Activated CD4-positive, alpha-beta T cell treated with anti-CD3 and anti-CD28 coated beads, Interleukin-2, amount 10 ng/mL, durations not matched to agents 24 days and 14 days (primary cell): ENCODE measurements at regions of chr15 and their contacts with region 1.

Region 1: DNA sequence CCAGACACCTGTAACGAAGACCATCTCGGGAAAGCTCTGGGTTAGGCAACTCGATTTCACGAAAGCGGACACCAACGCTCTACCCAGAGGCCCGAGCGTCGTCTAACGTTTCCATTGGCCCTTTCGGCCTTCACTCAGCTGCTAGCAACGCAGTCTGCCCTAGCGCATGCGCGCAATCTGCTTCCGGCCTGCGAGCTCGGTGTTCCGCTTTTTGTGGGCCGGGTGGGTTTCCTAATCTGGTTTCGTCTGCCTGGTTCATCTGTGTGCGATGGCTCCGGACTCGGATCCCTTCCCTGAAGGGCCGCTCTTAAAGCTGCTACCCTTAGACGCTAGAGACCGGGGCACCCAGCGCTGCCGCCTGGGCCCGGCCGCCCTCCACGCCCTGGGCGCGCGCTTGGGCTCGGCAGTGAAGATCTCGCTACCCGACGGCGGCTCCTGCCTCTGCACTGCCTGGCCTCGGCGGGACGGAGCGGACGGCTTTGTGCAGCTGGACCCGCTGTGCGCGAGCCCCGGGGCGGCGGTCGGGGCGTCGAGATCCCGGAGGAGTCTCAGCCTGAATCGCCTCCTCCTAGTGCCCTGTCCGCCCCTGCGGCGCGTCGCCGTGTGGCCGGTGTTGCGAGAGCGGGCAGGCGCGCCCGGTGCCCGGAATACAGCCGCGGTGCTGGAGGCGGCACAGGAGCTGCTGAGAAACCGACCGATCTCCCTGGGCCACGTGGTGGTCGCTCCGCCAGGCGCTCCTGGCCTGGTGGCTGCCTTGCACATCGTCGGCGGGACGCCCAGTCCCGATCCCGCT is 24.0 kb upstream of the GATM start:
- DNase-seq: peak; percentile 98
- H3K4me3 Mint-ChIP-seq: peak overlapping the region; percentile 90
- H3K27ac Mint-ChIP-seq: peak overlapping the region; percentile 87
- H3K4me1 Mint-ChIP-seq: peaks cover 26% of the 10 kb centered on the region
- H3K27me3 Mint-ChIP-seq: peaks cover 5% of the 10 kb centered on the region

Region 2: GRCh38 chr15:44728576-44729407 is 673.6 kb before region 1 on chr15:
- intact Hi-C with region 1: loop called (anchors 10 kb)
- DNase-seq: peak; percentile 99
- H3K4me3 Mint-ChIP-seq: peak overlapping the region; percentile 99
- H3K27ac Mint-ChIP-seq: peak overlapping the region; percentile 100
- H3K4me1 Mint-ChIP-seq: peaks cover 64% of the 10 kb centered on the region
- H3K27me3 Mint-ChIP-seq: peaks cover 2% of the 10 kb centered on the region

Region 3: GRCh38 chr15:45166834-45167630 is 235.3 kb before region 1 on chr15:
- intact Hi-C with region 1: loop called (anchors 1 kb)
- DNase-seq: peak; percentile 94
- H3K4me3 Mint-ChIP-seq: peak overlapping the region; percentile 73
- H3K27ac Mint-ChIP-seq: peak overlapping the region; percentile 84
- H3K4me1 Mint-ChIP-seq: peaks cover 19% of the 10 kb centered on the region
- H3K27me3 Mint-ChIP-seq: no peaks in the 10 kb centered on the region

Region 4: GRCh38 chr15:45279024-45279698 is 123.2 kb before region 1 on chr15:
- intact Hi-C with region 1: loop called (anchors 2 kb)
- DNase-seq: peak; percentile 99
- H3K4me3 Mint-ChIP-seq: peak overlapping the region; percentile 84
- H3K27ac Mint-ChIP-seq: peak overlapping the region; percentile 83
- H3K4me1 Mint-ChIP-seq: peaks cover 15% of the 10 kb centered on the region
- H3K27me3 Mint-ChIP-seq: peaks cover 6% of the 10 kb centered on the region

Region 5: DNA sequence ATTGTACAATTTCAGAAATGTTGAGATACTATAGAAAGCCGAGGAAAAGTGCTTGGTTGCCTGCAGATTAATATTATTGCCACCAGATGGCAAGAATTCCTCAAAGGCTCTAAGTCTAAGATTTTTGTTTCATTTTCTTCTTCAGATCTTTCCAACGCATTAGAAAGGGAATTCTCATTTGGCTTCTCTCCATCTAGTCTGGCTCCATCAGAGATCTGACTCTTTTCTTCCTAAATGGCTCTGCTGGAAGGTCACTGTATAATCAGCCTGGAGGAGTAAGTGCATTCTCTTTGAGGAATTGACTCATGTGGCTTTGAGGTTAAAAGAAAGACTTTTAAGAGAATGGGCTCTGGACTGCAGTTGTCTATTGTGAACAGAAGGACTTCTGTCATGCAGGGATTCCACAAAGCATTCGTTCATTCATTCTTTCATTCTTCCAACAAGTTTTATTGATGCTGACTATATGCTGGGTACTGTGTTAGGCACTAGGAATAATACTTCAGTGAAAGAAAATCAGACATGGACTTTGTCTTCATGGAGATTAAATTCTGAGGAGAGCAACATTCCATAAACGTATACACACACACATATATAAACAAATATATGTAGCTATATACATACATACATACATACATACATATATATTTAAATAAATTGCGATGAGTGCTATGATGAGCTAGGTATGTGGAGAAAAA is 95.0 kb before region 1 on chr15:
- intact Hi-C with region 1: loop called (anchors 1 kb)
- DNase-seq: no peak
- H3K4me3 Mint-ChIP-seq: peak overlapping the region; percentile 43
- H3K27ac Mint-ChIP-seq: no peak overlapping the region
- H3K4me1 Mint-ChIP-seq: peaks cover 7% of the 10 kb centered on the region
- H3K27me3 Mint-ChIP-seq: peaks cover 29% of the 10 kb centered on the region

Region 6: DNA sequence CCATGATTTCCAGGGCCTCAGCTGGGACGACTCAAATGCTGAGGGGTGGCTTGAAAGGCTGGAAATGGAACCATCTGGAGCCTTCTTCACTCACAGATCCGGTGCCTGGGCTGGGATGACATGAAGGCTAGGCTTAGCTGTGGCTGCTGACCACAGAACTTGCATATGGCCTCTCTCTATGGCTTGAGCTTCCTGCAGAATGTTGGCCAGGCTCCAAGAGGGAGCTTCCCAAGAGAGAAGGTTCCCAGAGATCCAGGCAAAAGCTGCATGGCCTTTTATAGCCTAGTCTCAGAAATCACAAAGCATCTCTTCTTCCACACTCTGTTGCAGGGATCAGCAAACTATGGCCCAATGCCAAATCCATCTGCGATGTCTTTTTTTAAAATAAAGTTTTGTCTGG is 68.8 kb before region 1 on chr15:
- intact Hi-C with region 1: no loop called
- DNase-seq: no peak
- H3K4me3 Mint-ChIP-seq: no peak overlapping the region
- H3K27ac Mint-ChIP-seq: no peak overlapping the region
- H3K4me1 Mint-ChIP-seq: no peaks in the 10 kb centered on the region
- H3K27me3 Mint-ChIP-seq: peaks cover 12% of the 10 kb centered on the region

Region 7: GRCh38 chr15:45457641-45458433 is 55.5 kb after region 1 on chr15:
- intact Hi-C with region 1: loop called (anchors 2 kb)
- DNase-seq: peak; percentile 95
- H3K4me3 Mint-ChIP-seq: peak overlapping the region; percentile 86
- H3K27ac Mint-ChIP-seq: peak overlapping the region; percentile 92
- H3K4me1 Mint-ChIP-seq: peaks cover 44% of the 10 kb centered on the region
- H3K27me3 Mint-ChIP-seq: no peaks in the 10 kb centered on the region

Region 8: DNA sequence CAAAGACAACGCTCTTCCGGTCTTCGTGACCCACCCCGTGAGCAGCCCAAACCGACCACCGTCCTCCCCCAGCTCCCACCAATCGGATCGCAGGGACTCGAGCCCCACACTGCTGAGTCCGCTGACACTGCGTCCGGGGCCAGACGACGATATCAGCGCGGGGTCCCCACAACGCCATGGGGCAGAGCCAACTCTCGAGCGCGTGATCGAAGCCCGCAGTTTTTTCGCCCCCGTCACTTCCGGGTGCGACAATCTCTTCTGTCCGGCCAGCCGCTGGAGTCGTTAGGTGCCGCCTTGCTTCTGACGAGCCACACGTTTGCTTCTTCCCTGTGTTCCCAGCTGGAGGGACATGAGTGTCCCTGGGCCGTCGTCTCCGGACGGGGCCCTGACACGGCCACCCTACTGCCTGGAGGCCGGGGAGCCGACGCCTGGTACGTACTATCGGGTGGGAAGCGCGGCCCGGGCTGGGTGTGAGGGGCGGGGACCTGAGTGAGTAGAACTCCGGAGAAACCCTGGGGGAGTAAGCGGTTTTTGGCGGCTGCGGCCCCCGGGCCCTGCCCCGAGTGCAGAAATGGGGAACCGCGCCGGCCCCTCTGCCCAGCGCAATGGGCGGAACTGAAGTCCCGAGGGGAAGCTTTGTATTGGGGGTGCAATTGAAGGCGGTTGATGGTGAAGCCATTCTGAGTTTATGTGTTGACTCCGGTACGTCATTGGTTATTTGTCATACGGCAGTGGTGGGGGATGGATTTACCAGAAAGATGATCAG is 184.9 kb after region 1 on chr15 and contains the start of gene BLOC1S6:
- intact Hi-C with region 1: loop called (anchors 5 kb)
- DNase-seq: peak; percentile 96
- H3K4me3 Mint-ChIP-seq: peak within 1 kb of the TSS; percentile 99
- H3K27ac Mint-ChIP-seq: peak within 1 kb of the TSS; percentile 100
- H3K4me1 Mint-ChIP-seq: peaks cover 31% of the 10 kb centered on the region
- H3K27me3 Mint-ChIP-seq: no peaks in the 10 kb centered on the region
- total RNA-seq, gene BLOC1S6: 42.8 and 44.8 TPM in 2 replicates